HCT116 (cell line): ENCODE measurements at regions of chr12 and their contacts with region 1.

Region 1: GRCh38 chr12:95217377-95218149 is at the starts of genes FGD6 and VEZT:
- DNase-seq: peak; percentile 98
- ATAC-seq: peak; percentile 87
- H3K4me3 ChIP-seq: peak within 1 kb of the TSS; percentile 73 to 83
- H3K27ac ChIP-seq: peak within 1 kb of the TSS; percentile 79
- H3K4me1 ChIP-seq: peaks cover 3 to 27% of the 10 kb centered on the region in 2 experiments; a peak in 2 of 4 replicates
- H3K27me3 ChIP-seq: no peaks in the 10 kb centered on the region
- CTCF ChIP-seq: peak; percentile 49 to 77 (median 57); a peak in 5 of 6 replicates
- POLR2A ChIP-seq: no peak
- RAD21 ChIP-seq: peak; percentile 97
- total RNA-seq, gene FGD6: 18.2 TPM
- total RNA-seq, gene VEZT: 46.4 TPM

Region 2: GRCh38 chr12:95072900-95073697 is 144.5 kb before region 1 on chr12 and contains the start of gene NR2C1:
- CTCF ChIA-PET with region 1: interaction called, 3 read pairs
- POLR2A ChIA-PET with region 1: no interaction called
- RAD21 ChIA-PET with region 1: no interaction called
- intact Hi-C with region 1: loop called (anchors 1 kb)
- DNase-seq: peak; percentile 91
- ATAC-seq: peak; percentile 97
- H3K4me3 ChIP-seq: peak within 1 kb of the TSS; percentile 87 to 96
- H3K27ac ChIP-seq: peak within 1 kb of the TSS; percentile 73
- H3K4me1 ChIP-seq: peaks cover 0 to 14% of the 10 kb centered on the region in 2 experiments; a peak in 2 of 4 replicates
- H3K27me3 ChIP-seq: no peaks in the 10 kb centered on the region
- CTCF ChIP-seq: peak in 1 of 3 experiments; percentile 60; a peak in 1 of 6 replicates
- POLR2A ChIP-seq: peak; percentile 52
- RAD21 ChIP-seq: 0 out of 2 replicates have a peak, but pooled peaks have one; percentile 8
- total RNA-seq, gene NR2C1: 33.7 TPM

Region 3: DNA sequence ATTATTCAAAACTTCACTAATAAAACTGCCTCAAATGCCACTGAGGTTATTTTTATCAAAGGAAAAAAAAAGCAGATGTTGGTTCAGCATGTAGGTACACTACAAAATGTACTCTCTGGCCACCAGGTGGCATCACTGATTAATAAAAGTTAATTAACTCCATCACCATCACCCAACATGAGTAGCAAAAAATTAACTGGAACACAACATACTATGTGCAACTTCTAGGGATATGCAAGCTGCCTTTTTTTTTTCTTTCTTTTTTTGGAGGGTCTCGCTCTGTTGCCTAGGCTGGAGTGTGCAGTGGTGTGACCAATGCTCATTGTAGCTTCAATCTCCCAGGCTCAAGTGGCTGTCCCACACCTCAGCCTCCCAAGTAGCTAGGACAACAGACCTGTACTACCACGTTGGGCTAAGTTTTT is 100.4 kb before region 1 on chr12:
- CTCF ChIA-PET with region 1: interaction called, 27 read pairs
- POLR2A ChIA-PET with region 1: interaction called, 5 read pairs
- RAD21 ChIA-PET with region 1: interaction called, 15 to 19 read pairs
- intact Hi-C with region 1: loop called (anchors 1 kb)
- DNase-seq: peak; percentile 64
- ATAC-seq: peak; percentile 80
- H3K4me3 ChIP-seq: peak overlapping the region in 1 of 2 experiments; percentile 23; a peak in 2 of 4 replicates
- H3K27ac ChIP-seq: peak overlapping the region; percentile 5; the same call in 1 of the 2 replicates
- H3K4me1 ChIP-seq: peaks cover 9 to 49% of the 10 kb centered on the region in 2 experiments
- H3K27me3 ChIP-seq: no peaks in the 10 kb centered on the region
- CTCF ChIP-seq: peak; percentile 47 to 91 (median 83)
- POLR2A ChIP-seq: no peak
- RAD21 ChIP-seq: peak; percentile 93

Region 4: GRCh38 chr12:95182868-95183415 is 34.6 kb before region 1 on chr12:
- CTCF ChIA-PET with region 1: interaction called, 3 read pairs
- POLR2A ChIA-PET with region 1: interaction called, 5 read pairs
- RAD21 ChIA-PET with region 1: no interaction called
- intact Hi-C with region 1: loop called (anchors 2 kb)
- DNase-seq: peak; percentile 92
- ATAC-seq: peak; percentile 71
- H3K4me3 ChIP-seq: 0 out of 4 replicates have a peak overlapping the region, but pooled peaks of 1 of the 2 experiments have one; percentile 3
- H3K27ac ChIP-seq: peak overlapping the region; percentile 49
- H3K4me1 ChIP-seq: peaks cover 15 to 57% of the 10 kb centered on the region in 2 experiments
- H3K27me3 ChIP-seq: no peaks in the 10 kb centered on the region
- CTCF ChIP-seq: no peak
- POLR2A ChIP-seq: no peak
- RAD21 ChIP-seq: peak; percentile 37; the same call in 1 of the 2 replicates

Region 5: GRCh38 chr12:95204141-95204866 is 13.3 kb before region 1 on chr12:
- CTCF ChIA-PET with region 1: interaction called, 4 read pairs
- POLR2A ChIA-PET with region 1: interaction called, 11 read pairs
- RAD21 ChIA-PET with region 1: no interaction called
- intact Hi-C with region 1: no loop called
- DNase-seq: peak; percentile 96
- ATAC-seq: peak; percentile 85
- H3K4me3 ChIP-seq: peak overlapping the region; percentile 40 to 52
- H3K27ac ChIP-seq: peak overlapping the region; percentile 94
- H3K4me1 ChIP-seq: peaks cover 62 to 88% of the 10 kb centered on the region in 2 experiments
- H3K27me3 ChIP-seq: no peaks in the 10 kb centered on the region
- CTCF ChIP-seq: no peak
- POLR2A ChIP-seq: no peak
- RAD21 ChIP-seq: peak; percentile 54